Left lung (tissue), 14 donors: ENCODE measurements at regions of chr9 and their contacts with region 1.

Region 1: GRCh38 chr9:19085295-19085694 is 17.4 kb downstream of the HAUS6 start:
- DNase-seq: no peak
- ATAC-seq: no peak
- H3K4me3 ChIP-seq: no peak overlapping the region
- H3K27ac ChIP-seq: no peak overlapping the region
- H3K4me1 ChIP-seq: no peaks in the 10 kb centered on the region
- H3K27me3 ChIP-seq: no peaks in the 10 kb centered on the region
- CTCF ChIP-seq: peak in 1 of 2 donors; percentile 12

Region 2: DNA sequence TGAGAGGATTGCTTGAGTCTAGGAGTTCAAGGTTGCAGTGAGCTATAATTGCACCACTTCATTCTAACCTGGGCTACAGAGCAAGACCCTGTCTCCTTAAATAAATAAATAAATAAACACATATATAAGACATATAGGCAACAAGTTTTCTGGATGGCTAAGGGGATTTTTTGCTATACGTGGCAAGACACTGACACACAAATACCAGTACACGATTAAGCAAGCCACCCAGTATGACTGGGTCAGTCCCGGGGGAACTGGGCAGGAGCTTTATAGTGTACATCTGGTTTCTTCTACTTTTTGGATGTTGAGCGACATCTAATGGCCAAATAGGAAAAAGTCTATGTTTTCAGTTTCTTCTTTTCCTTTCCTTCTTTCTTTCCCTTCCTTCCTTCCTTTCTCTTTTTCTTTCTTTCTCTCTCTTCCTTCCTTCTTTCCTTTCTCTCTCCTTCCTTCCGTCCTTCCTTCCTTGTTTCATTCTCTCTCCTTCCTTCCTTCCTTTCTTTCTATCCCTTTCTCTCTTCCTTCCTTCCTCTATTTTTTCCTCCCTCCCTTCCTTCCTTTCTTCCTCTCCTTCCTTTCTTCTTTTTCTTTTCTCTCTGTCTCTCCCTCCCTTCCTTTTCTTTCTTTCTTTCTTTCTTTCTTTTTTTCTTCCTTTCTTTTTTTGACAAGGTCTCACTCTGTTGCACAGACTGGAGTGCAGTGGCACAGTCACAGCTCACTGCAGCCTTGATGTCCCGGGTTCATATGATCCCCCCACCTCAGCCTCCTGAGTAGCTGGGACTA is 89.0 kb after region 1 on chr9:
- intact Hi-C with region 1: loop called in 1 of 2 experiments (anchors 10 kb)
- DNase-seq: peak in 3 of 4 donors; percentile 39 to 61 (median 54)
- ATAC-seq: peak; percentile 95
- H3K4me3 ChIP-seq: no peak overlapping the region
- H3K27ac ChIP-seq: peak overlapping the region in 1 of 2 donors; percentile 28
- H3K4me1 ChIP-seq: peaks cover 9 to 37% of the 10 kb centered on the region in 2 donors
- H3K27me3 ChIP-seq: no peaks in the 10 kb centered on the region
- CTCF ChIP-seq: peak; percentile 42 to 58